Heart right ventricle (tissue), 16 donors: ENCODE measurements at regions of chr6 and their contacts with region 1.

Region 1: GRCh38 chr6:105431226-105431625 is 28.3 kb upstream of the PREP start:
- DNase-seq: peak in 1 of 2 donors; percentile 16
- ATAC-seq: no peak
- H3K4me3 ChIP-seq: no peak overlapping the region
- H3K27ac ChIP-seq: no peak overlapping the region
- H3K4me1 ChIP-seq: peaks cover 0 to 12% (median 0%) of the 10 kb centered on the region in 9 donors
- H3K27me3 ChIP-seq: peaks cover 0 to 8% (median 3%) of the 10 kb centered on the region in 7 donors
- CTCF ChIP-seq: peak; percentile 27 to 76 (median 60)

Region 2: GRCh38 chr6:105087571-105088211 is 343.5 kb before region 1 on chr6:
- intact Hi-C with region 1: loop called in 3 of 10 experiments (anchors 5 kb)
- DNase-seq: peak in 1 of 2 donors; percentile 28
- ATAC-seq: peak in 4 of 8 donors; percentile 43 to 62 (median 58)
- H3K4me3 ChIP-seq: no peak overlapping the region
- H3K27ac ChIP-seq: no peak overlapping the region
- H3K4me1 ChIP-seq: peaks cover 0 to 8% (median 0%) of the 10 kb centered on the region in 9 donors
- H3K27me3 ChIP-seq: no peaks in the 10 kb centered on the region
- CTCF ChIP-seq: peak; percentile 65 to 92 (median 84)

Region 3: GRCh38 chr6:106181664-106182418 is 750.6 kb after region 1 on chr6:
- intact Hi-C with region 1: no loop called
- DNase-seq: no peak
- ATAC-seq: no peak
- H3K4me3 ChIP-seq: no peak overlapping the region
- H3K27ac ChIP-seq: no peak overlapping the region
- H3K4me1 ChIP-seq: peaks cover 0 to 7% (median 0%) of the 10 kb centered on the region in 9 donors
- H3K27me3 ChIP-seq: no peaks in the 10 kb centered on the region
- CTCF ChIP-seq: no peak

Region 4: GRCh38 chr6:106223300-106223930 is 792.2 kb after region 1 on chr6:
- intact Hi-C with region 1: loop called in 7 of 10 experiments (anchors 2 to 10 kb)
- DNase-seq: peak in 1 of 2 donors; percentile 66
- ATAC-seq: peak in 5 of 8 donors; percentile 62 to 75 (median 63)
- H3K4me3 ChIP-seq: no peak overlapping the region
- H3K27ac ChIP-seq: no peak overlapping the region
- H3K4me1 ChIP-seq: peaks cover 0 to 10% (median 0%) of the 10 kb centered on the region in 9 donors
- H3K27me3 ChIP-seq: no peaks in the 10 kb centered on the region
- CTCF ChIP-seq: peak; percentile 40 to 76 (median 66)

Region 5: GRCh38 chr6:106300944-106301343 is 869.7 kb after region 1 on chr6:
- intact Hi-C with region 1: loop called in 6 of 10 experiments (anchors 5 to 10 kb)
- DNase-seq: no peak
- ATAC-seq: peak in 1 of 8 donors; percentile 38
- H3K4me3 ChIP-seq: no peak overlapping the region
- H3K27ac ChIP-seq: no peak overlapping the region
- H3K4me1 ChIP-seq: peaks cover 0 to 5% (median 0%) of the 10 kb centered on the region in 9 donors
- H3K27me3 ChIP-seq: no peaks in the 10 kb centered on the region
- CTCF ChIP-seq: peak; percentile 15 to 68 (median 57)

Region 6: GRCh38 chr6:106444777-106445507 is 1013.7 kb after region 1 on chr6:
- intact Hi-C with region 1: loop called in 1 of 10 experiments (anchors 5 kb)
- DNase-seq: peak in 1 of 2 donors; percentile 22
- ATAC-seq: peak in 6 of 8 donors; percentile 59 to 74 (median 68)
- H3K4me3 ChIP-seq: no peak overlapping the region
- H3K27ac ChIP-seq: no peak overlapping the region
- H3K4me1 ChIP-seq: peaks cover 0 to 29% (median 0%) of the 10 kb centered on the region in 9 donors
- H3K27me3 ChIP-seq: peaks cover 0 to 37% (median 34%) of the 10 kb centered on the region in 7 donors
- CTCF ChIP-seq: peak; percentile 58 to 83 (median 76)

Region 7: DNA sequence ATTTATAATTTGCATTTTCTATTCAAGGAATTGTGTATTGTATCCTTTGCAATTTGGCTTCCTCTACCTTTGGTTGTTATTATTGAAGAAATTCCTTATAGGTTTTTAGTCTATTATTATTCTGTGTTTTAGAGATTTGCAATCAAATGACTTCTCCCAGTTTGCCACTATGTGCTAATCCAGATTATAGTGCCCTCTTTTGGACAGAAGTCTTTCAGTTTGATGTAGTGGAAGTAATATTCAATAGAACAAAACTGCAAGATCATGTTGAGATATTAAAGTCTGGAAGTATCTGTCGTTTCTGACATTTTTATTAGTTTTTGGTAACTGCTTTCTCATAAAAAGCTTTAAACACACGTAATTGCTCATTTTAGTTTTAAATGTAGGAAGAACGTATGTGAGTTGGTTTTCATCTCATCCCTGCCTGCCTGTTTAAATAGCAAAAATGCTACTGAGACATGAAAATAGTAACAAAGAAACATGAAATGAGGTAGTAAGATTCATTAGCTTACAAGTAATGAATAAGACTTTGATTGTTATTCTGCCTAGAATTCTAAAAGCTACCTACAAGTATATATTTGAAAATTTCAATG is 1125.2 kb after region 1 on chr6:
- intact Hi-C with region 1: loop called in 1 of 10 experiments (anchors 10 kb)
- DNase-seq: no peak
- ATAC-seq: no peak
- H3K4me3 ChIP-seq: no peak overlapping the region
- H3K27ac ChIP-seq: no peak overlapping the region
- H3K4me1 ChIP-seq: peaks cover 0 to 14% (median 0%) of the 10 kb centered on the region in 9 donors
- H3K27me3 ChIP-seq: no peaks in the 10 kb centered on the region
- CTCF ChIP-seq: peak in 6 of 9 donors; percentile 34 to 65 (median 47)